ENCODE measurements at regions of chr1 and their contacts with region 1.

Region 1: GRCh38 chr1:64242895-64243756 is 39.7 kb downstream of the UBE2U start:
- DNase-seq: no peak
- H3K4me3 ChIP-seq: no peak overlapping the region
- H3K27ac ChIP-seq: no peak overlapping the region
- H3K4me1 ChIP-seq: peaks cover 19% of the 10 kb centered on the region
- H3K27me3 ChIP-seq: peaks cover 5% of the 10 kb centered on the region
- CTCF ChIP-seq: peak; percentile 54

Region 2: GRCh38 chr1:63674238-63674864 is 568.8 kb before region 1 on chr1:
- intact Hi-C with region 1: loop called (anchors 10 kb)
- DNase-seq: peak; percentile 67
- H3K4me3 ChIP-seq: no peak overlapping the region
- H3K27ac ChIP-seq: peak overlapping the region; percentile 37
- H3K4me1 ChIP-seq: peaks cover 11% of the 10 kb centered on the region
- H3K27me3 ChIP-seq: no peaks in the 10 kb centered on the region
- CTCF ChIP-seq: peak; percentile 74

Region 3: GRCh38 chr1:64308866-64309265 is 65.7 kb after region 1 on chr1:
- intact Hi-C with region 1: no loop called
- DNase-seq: no peak
- H3K4me3 ChIP-seq: no peak overlapping the region
- H3K27ac ChIP-seq: no peak overlapping the region
- H3K4me1 ChIP-seq: no peaks in the 10 kb centered on the region
- H3K27me3 ChIP-seq: no peaks in the 10 kb centered on the region
- CTCF ChIP-seq: no peak